Activated CD8-positive, alpha-beta T cell treated with anti-CD3 and anti-CD28 coated beads, Interleukin-2, amount 10 ng/mL, durations not matched to agents 7 days and 5 days (primary cell): ENCODE measurements at regions of chr20 and their contacts with region 1.

Region 1: GRCh38 chr20:3679749-3680700 is 1.8 kb downstream of the ADAM33 start:
- DNase-seq: no peak
- ATAC-seq: no peak
- H3K4me3 Mint-ChIP-seq: no peak overlapping the region
- H3K27ac Mint-ChIP-seq: no peak overlapping the region
- H3K4me1 Mint-ChIP-seq: no peaks in the 10 kb centered on the region
- H3K27me3 Mint-ChIP-seq: peaks cover 61% of the 10 kb centered on the region

Region 2: GRCh38 chr20:3563548-3564177 is 116.4 kb before region 1 on chr20:
- CTCF ChIA-PET with region 1: interaction called, 12 read pairs
- POLR2A ChIA-PET with region 1: no interaction called
- DNase-seq: peak; percentile 49
- ATAC-seq: no peak
- H3K4me3 Mint-ChIP-seq: no peak overlapping the region
- H3K27ac Mint-ChIP-seq: no peak overlapping the region
- H3K4me1 Mint-ChIP-seq: no peaks in the 10 kb centered on the region
- H3K27me3 Mint-ChIP-seq: no peaks in the 10 kb centered on the region

Region 3: GRCh38 chr20:3710703-3711483 is 30.9 kb after region 1 on chr20:
- CTCF ChIA-PET with region 1: interaction called, 59 read pairs
- POLR2A ChIA-PET with region 1: no interaction called
- DNase-seq: peak; percentile 81
- ATAC-seq: peak; percentile 82
- H3K4me3 Mint-ChIP-seq: no peak overlapping the region
- H3K27ac Mint-ChIP-seq: no peak overlapping the region
- H3K4me1 Mint-ChIP-seq: no peaks in the 10 kb centered on the region
- H3K27me3 Mint-ChIP-seq: peaks cover 6% of the 10 kb centered on the region

Region 4: DNA sequence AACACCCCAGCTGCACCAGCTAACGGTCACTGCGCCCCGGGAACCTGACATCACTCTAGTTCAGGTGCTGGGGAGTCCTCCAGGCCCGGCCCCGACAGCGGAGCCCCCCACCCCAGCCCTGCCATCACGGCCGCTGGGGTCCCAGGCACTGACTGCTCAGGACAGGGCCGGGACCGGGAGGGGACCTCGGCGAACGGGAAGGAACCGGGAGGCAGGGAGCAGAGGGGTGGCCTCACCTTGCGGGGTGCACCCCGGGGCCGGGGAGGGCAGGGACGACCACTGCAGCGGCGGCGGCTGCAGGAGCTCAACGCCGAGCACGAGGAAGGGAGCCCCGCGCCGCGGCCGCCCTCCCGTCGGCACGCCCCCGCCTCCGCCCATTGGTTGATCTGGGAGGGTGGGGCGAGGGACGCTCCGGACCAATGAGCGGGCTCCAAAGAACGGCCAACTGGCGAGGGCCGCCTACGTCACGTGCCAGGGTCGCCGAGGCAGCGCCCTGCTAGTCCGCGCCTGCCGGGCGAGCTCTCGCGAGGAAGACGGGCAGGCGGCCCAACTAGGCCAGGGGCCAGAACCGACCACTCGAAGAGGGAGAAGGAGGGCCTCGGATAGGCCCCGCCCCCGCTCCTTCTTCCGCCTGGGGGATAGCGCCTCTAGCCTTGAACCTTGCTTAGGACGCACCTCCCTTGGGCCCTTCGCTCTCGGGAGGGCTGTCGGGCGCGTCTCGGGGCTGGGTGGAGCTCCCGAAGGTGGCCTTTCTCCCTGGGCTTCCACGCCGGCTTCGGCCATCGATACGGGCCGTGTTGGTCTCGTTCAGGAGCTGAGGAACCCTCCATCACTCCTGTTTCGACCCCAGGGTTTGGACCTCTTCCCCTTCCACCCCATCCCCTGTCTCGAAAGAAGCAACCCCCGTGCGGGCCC is 87.7 kb after region 1 on chr20 and contains the start of gene ADISSP:
- CTCF ChIA-PET with region 1: interaction called, 15 read pairs
- POLR2A ChIA-PET with region 1: no interaction called
- DNase-seq: peak; percentile 99
- ATAC-seq: peak; percentile 95
- H3K4me3 Mint-ChIP-seq: peak within 1 kb of the TSS; percentile 89
- H3K27ac Mint-ChIP-seq: peak within 1 kb of the TSS; percentile 94
- H3K4me1 Mint-ChIP-seq: peaks cover 30% of the 10 kb centered on the region
- H3K27me3 Mint-ChIP-seq: no peaks in the 10 kb centered on the region
- total RNA-seq, gene ADISSP: 37.4 to 38.5 TPM

Region 5: GRCh38 chr20:3924304-3925112 is 244.5 kb after region 1 on chr20:
- CTCF ChIA-PET with region 1: no interaction called
- POLR2A ChIA-PET with region 1: no interaction called
- DNase-seq: no peak
- ATAC-seq: no peak
- H3K4me3 Mint-ChIP-seq: no peak overlapping the region
- H3K27ac Mint-ChIP-seq: peak overlapping the region; percentile 60
- H3K4me1 Mint-ChIP-seq: peaks cover 36% of the 10 kb centered on the region
- H3K27me3 Mint-ChIP-seq: no peaks in the 10 kb centered on the region